Heart left ventricle (tissue), 16 donors: ENCODE measurements at regions of chr4 and their contacts with region 1.

Region 1: GRCh38 chr4:128060699-128061565 is at the start of gene LARP1B:
- DNase-seq: peak; percentile 95 to 98 (median 97)
- ATAC-seq: peak; percentile 97 to 98 (median 98)
- H3K4me3 ChIP-seq: peak within 1 kb of the TSS; percentile 70 to 92 (median 76)
- H3K27ac ChIP-seq: peak within 1 kb of the TSS; percentile 87 to 99 (median 97)
- H3K4me1 ChIP-seq: peaks cover 0 to 15% (median 4%) of the 10 kb centered on the region in 12 donors
- H3K27me3 ChIP-seq: no peaks in the 10 kb centered on the region
- CTCF ChIP-seq: no peak
- POLR2A ChIP-seq: peak; percentile 17 to 90
- total RNA-seq, gene LARP1B: 14.8 to 22.5 (median 18.0) TPM

Region 2: GRCh38 chr4:127965062-127965802 is 95.7 kb before region 1 on chr4 and contains the starts of genes ABHD18 and MFSD8:
- intact Hi-C with region 1: loop called in 1 of 10 experiments (anchors 5 kb)
- DNase-seq: peak; percentile 98 to 100 (median 100)
- ATAC-seq: peak; percentile 95 to 99 (median 98)
- H3K4me3 ChIP-seq: peak within 1 kb of the TSS; percentile 73 to 94 (median 80)
- H3K27ac ChIP-seq: peak within 1 kb of the TSS; percentile 85 to 97 (median 94)
- H3K4me1 ChIP-seq: peaks cover 0 to 46% (median 16%) of the 10 kb centered on the region in 12 donors
- H3K27me3 ChIP-seq: no peaks in the 10 kb centered on the region
- CTCF ChIP-seq: peak in 11 of 12 donors; percentile 8 to 60 (median 47)
- POLR2A ChIP-seq: peak in 1 of 2 donors; percentile 70
- total RNA-seq, gene ABHD18: 6.3 to 56.3 (median 21.0) TPM
- total RNA-seq, gene MFSD8: 6.1 to 17.4 (median 10.3) TPM

Region 3: DNA sequence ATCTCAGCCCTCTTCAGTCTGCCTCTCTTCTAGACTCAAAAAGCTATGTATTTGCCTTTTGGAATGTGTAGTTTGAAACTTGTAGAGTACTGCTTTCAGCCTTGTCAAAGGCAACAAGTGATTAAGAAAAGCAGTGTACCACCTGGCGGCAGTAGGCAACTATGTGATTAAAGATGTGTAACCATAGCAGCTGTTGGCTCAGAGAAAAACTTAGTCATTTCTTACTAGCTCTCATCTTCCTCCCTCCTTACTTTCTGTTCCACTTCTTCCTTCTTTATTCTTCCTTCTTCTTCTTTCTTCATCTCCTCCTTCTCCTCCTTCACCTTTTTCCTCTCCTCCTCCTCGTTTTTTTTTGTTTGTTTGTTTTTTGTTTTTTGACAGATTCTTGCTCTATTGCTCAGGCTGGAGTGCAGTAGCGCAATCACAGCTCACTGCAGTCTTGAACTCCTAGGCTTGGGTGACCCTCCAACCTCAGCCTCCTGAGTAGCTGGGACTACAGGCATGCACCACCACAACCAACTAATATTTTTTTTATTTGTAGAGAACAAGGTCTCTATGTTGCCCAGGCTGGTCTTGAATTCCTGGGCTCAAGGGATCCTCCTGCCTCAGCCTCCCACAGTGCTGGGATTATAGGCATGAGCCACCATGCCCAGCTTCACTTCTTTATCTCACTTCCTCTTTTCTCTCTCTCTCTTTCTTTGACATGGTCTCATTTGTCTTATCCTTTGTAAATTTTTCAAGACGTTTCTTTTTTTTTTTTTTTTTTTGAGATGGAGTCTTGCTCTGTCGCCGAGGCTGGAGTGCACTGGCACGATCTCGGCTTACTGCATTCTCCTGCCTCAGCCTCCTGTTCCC is 63.2 kb before region 1 on chr4:
- intact Hi-C with region 1: no loop called
- DNase-seq: no peak
- ATAC-seq: peak in 3 of 4 donors; percentile 54 to 74 (median 55)
- H3K4me3 ChIP-seq: no peak overlapping the region
- H3K27ac ChIP-seq: no peak overlapping the region
- H3K4me1 ChIP-seq: peaks cover 0 to 16% (median 0%) of the 10 kb centered on the region in 12 donors
- H3K27me3 ChIP-seq: no peaks in the 10 kb centered on the region
- CTCF ChIP-seq: peak in 3 of 12 donors; percentile 7 to 35 (median 18)
- POLR2A ChIP-seq: no peak

Region 4: DNA sequence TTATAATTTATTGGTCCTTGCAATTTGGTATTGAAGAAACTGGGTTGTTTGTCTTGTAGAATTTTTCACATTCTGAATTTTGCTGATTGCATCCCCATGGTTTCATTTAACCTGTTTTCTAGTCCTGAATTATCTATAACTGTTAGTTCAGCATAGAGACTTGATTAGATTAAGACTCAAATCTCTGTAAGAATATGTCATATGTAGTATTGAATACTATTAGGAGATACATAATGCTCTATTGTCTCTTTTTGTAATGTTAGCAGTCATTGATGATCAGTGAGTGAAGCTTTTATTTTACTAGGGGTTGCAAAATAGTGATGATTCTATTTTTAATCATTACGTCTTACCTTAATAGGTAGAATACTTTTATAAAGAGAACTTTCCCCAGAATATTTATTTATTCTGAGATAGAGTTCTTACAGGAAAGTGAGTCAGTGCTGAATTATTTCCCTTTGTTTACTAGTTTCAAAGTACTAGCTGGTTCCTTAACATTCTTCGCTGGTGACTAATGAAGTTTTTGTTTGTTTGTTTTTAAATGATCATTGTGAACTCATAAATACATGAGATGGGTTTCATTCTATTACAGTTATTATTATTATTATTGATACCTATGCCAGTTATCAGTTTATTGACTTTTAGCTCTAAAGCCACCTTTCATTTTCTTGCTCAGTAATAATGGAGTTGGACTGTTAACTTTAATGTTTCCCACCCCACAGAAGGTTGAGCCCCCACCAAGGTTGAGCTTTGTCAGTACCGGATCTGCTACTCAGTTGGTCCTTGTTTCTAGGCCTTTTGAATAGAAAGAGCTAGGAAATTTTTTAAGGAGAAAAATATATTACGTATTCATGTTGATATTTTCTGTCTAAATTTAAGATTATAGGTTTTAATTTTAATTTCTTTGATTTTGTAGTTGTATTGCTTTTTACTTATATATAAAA is 102.5 kb after region 1 on chr4:
- intact Hi-C with region 1: loop called in 1 of 10 experiments (anchors 5 kb)
- DNase-seq: no peak
- ATAC-seq: no peak
- H3K4me3 ChIP-seq: no peak overlapping the region
- H3K27ac ChIP-seq: peak overlapping the region in 2 of 12 donors; percentile 8 to 24
- H3K4me1 ChIP-seq: peaks cover 0 to 13% (median 3%) of the 10 kb centered on the region in 12 donors
- H3K27me3 ChIP-seq: no peaks in the 10 kb centered on the region
- CTCF ChIP-seq: no peak
- POLR2A ChIP-seq: no peak

Region 5: DNA sequence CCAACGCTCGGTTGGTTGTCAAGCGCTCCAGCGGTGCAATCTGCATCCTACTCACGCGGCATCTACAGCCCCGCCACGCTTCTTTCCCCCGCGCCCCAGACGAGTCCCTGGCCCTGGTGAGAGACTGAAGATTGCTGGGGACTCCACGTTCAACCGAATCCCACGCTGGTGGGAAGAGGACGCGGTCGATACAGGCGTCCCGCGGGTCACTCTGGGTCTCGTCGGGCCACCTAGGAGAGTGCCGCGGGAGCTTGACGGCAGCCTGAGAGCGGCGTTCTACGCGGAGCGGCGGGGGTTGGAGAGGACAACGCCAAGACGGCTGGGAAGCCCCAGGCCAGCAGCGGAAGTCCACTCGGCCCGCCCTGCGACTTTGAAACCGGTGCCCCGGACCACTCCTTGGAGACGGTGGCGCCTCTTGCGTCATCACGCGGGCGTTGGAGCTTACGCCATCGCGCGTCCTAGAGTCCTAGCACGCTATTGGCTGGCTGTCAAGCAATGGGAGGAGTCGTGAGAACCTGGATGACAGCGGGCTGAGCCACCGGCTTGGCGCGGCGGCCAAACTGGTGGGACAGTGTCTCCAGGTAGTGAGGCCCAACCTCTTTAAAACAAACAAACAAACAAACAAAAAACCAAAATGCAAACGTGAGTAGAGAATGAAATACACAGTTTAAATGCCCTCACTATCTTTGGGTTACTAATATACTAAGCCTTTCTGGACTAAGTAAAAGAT is 1032.4 kb after region 1 on chr4 and contains the start of gene SCLT1:
- intact Hi-C with region 1: loop called in 1 of 10 experiments (anchors 5 kb)
- DNase-seq: peak; percentile 99 to 100 (median 99)
- ATAC-seq: peak; percentile 99
- H3K4me3 ChIP-seq: peak within 1 kb of the TSS; percentile 42 to 92 (median 78)
- H3K27ac ChIP-seq: peak within 1 kb of the TSS; percentile 81 to 98 (median 94)
- H3K4me1 ChIP-seq: peaks cover 0 to 59% (median 23%) of the 10 kb centered on the region in 12 donors
- H3K27me3 ChIP-seq: no peaks in the 10 kb centered on the region
- CTCF ChIP-seq: peak in 1 of 12 donors; percentile 12
- POLR2A ChIP-seq: peak in 1 of 2 donors; percentile 91
- total RNA-seq, gene SCLT1: 5.3 to 13.7 (median 10.8) TPM